Activated CD8-positive, alpha-beta T cell treated with anti-CD3 and anti-CD28 coated beads for 36 hours (primary cell): ENCODE measurements at regions of chr20 and their contacts with region 1.

Region 1: DNA sequence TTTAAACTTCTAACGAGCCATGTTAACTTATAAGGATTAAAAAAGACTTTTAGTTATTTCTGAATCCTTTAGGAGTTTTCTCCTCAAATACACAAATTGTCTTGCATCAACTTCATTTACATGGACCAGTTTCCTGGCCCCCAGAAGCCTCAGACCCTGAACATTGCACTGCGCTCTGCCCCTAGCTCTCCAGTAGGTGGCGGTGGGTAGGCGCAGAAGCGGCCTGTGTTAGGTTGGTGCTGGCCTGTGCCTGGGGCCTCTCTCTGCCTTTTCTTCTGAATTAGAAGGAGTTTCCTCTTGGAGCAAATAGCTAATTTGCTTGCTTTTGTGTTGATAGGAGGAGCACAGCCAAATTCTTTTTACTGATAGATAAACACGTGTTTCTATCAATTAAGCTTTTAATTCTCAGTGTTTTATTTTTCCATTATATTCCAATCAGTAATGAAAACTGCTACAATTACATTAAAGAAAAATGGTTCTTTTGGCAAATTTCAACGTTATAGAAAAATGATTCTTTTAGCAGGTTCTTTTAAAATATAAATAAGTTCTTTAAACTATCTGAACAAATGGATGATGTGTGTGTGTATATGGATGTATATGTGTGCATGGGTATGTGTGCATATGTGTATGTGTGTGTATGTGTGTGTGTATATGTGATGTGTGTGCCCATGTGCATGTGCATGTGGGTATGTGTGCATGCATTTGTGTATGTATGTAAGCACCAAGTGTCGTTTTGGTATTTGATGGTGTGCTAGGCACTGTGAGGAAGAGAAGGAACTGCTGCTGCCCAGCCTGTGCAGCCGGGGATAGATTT is 44.5 kb downstream of the DTD1 start:
- DNase-seq: peak; percentile 74
- ATAC-seq: peak; percentile 94
- H3K4me3 Mint-ChIP-seq: no peak overlapping the region
- H3K27ac Mint-ChIP-seq: no peak overlapping the region
- H3K4me1 Mint-ChIP-seq: no peaks in the 10 kb centered on the region
- H3K27me3 Mint-ChIP-seq: no peaks in the 10 kb centered on the region
- CTCF ChIP-seq: peak; percentile 96

Region 2: DNA sequence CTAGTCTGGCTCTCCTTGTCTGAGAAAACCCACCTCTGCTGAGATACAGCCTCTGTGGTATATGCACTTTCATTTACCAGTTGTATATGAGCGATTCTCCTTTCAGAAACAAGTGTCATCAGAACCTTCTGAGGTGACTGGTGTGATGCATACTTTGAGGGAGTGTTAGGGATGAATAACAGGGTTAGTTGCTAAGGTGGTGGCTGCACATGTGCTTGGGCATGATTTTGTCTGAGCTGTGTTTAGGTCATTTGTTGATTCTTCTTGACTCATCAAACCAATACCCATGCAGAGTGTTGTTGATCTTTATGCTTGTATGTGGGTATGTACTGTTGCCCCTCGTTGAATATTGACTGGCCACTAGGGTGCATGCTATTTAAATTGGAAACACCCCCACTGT is 18.8 kb before region 1 on chr20:
- CTCF ChIA-PET with region 1: interaction called, 10 read pairs
- POLR2A ChIA-PET with region 1: no interaction called
- intact Hi-C with region 1: no loop called
- DNase-seq: no peak
- ATAC-seq: peak; percentile 76
- H3K4me3 Mint-ChIP-seq: no peak overlapping the region
- H3K27ac Mint-ChIP-seq: no peak overlapping the region
- H3K4me1 Mint-ChIP-seq: peaks cover 11% of the 10 kb centered on the region
- H3K27me3 Mint-ChIP-seq: no peaks in the 10 kb centered on the region
- CTCF ChIP-seq: no peak

Region 3: DNA sequence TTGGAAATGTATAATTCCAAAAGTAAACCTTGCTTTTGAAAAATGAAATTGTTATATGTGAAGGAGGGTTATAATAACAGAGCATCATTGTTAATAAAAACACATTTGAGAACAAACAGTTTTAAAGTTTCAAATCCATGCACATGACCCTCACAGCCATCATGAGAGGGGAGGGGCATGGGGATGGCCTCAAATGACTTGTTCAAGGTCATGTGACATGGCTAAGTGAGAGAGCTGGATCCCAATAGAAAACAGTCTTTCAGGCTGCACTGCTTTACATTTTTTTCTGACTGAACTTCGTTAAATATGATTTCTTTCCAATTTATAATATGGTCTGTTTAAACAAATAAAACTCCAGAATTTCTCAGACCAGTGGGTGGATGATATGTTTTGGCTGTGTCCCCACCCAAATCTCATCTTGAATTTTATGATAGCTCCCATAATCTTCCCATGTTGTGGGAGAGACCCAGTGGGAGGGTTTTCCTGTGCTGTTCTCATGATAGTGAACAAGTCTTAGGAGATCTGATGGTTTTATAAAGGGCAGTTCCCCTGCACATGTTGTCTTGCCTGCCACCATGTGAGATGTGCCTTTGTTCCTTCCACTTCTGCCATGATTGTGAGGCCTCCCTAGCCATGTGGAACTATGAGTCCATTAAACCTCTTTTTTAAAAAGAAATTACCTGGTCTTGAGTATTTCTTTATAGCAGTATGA is 21.5 kb after region 1 on chr20:
- CTCF ChIA-PET with region 1: interaction called, 14 read pairs
- POLR2A ChIA-PET with region 1: no interaction called
- intact Hi-C with region 1: no loop called
- DNase-seq: no peak
- ATAC-seq: no peak
- H3K4me3 Mint-ChIP-seq: no peak overlapping the region
- H3K27ac Mint-ChIP-seq: no peak overlapping the region
- H3K4me1 Mint-ChIP-seq: no peaks in the 10 kb centered on the region
- H3K27me3 Mint-ChIP-seq: no peaks in the 10 kb centered on the region
- CTCF ChIP-seq: no peak